ENCODE measurements at regions of chr22 and their contacts with region 1.

Region 1: DNA sequence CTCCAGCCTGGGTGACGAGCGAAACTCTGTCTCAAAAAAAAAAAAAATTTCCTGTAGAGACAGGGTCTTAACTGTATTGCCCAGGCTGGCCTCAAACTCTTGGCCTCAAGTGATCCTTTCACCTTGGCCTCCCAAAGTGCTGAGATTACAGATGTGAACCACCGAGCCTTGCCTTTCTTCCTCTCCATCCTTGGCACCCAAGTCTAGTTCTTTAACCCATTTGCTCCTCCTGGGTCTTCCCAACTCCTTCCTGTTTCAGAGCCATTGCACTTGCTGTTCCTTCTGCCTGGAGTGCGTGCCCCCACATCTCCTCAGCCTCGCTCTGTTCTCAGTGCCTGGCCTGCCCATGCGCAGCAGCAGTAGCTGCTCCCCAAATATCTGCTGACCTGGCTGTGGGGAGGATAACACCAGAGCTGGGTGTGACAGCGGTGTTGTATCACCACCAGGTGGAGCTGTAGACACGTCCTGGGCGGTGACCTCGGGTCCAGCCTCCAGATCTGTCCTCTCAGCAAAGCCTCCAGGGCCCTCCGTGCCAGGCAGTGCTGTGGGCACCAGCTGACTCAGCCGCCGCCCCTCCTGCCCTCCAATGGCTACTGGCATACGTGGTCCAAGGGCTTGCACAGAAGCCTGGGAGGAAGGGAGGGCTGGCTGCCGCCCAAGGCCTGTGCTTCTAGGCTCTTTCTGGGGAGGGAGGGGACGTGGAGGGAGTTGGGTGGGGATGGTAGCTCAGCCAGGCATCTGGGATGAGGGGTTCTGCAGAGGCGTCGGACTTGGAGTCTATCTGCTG is 22.0 kb downstream of the TEF start:
- DNase-seq: peak; percentile 60 to 90 (median 81)
- ATAC-seq: peak; percentile 99
- H3K4me3 ChIP-seq: no peak overlapping the region
- H3K4me3 Mint-ChIP-seq: no peak overlapping the region
- H3K27ac ChIP-seq: no peak overlapping the region
- H3K27ac Mint-ChIP-seq: no peak overlapping the region
- H3K4me1 ChIP-seq: peaks cover 13% of the 10 kb centered on the region
- H3K4me1 Mint-ChIP-seq: peaks cover 11% of the 10 kb centered on the region
- H3K27me3 ChIP-seq: no peaks in the 10 kb centered on the region
- H3K27me3 Mint-ChIP-seq: no peaks in the 10 kb centered on the region
- CTCF ChIP-seq: peak; percentile 93

Region 2: GRCh38 chr22:41327124-41327523 is 76.6 kb before region 1 on chr22:
- CTCF ChIA-PET with region 1: no interaction called
- POLR2A ChIA-PET with region 1: no interaction called
- intact Hi-C with region 1: no loop called
- DNase-seq: no peak
- ATAC-seq: no peak
- H3K4me3 ChIP-seq: no peak overlapping the region
- H3K4me3 Mint-ChIP-seq: no peak overlapping the region
- H3K27ac ChIP-seq: no peak overlapping the region
- H3K27ac Mint-ChIP-seq: no peak overlapping the region
- H3K4me1 ChIP-seq: no peaks in the 10 kb centered on the region
- H3K4me1 Mint-ChIP-seq: no peaks in the 10 kb centered on the region
- H3K27me3 ChIP-seq: no peaks in the 10 kb centered on the region
- H3K27me3 Mint-ChIP-seq: no peaks in the 10 kb centered on the region
- CTCF ChIP-seq: no peak

Region 3: DNA sequence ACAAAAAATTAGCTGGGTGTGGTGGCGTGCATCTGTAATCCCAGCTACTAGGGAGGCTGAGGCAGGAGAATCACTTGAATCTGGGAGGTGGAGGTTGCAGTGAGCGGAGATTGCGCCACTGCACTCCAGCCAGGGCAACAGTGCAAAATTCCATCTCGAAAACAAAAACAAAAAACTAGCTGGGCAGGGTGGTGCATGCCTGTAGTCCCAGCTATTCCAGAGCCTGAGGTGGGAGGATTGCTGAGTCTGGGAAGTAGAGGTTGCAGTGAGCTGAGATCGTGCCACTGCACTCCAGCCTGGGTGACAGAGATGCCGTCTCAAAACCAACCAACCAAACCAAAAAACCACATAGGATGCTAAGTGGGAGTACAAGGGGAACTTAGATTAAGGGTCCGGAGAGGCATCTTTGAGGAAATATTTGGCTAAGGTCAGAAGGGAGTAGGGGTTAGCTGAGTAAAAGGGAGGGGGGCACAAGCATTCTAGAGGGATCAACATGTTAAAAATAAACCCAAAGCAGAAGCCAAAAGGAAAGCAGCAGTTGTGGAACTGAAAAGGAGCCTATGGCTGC is 54.5 kb after region 1 on chr22:
- CTCF ChIA-PET with region 1: interaction called, 13 read pairs
- POLR2A ChIA-PET with region 1: interaction called, 3 read pairs
- intact Hi-C with region 1: no loop called
- DNase-seq: no peak
- ATAC-seq: no peak
- H3K4me3 ChIP-seq: no peak overlapping the region
- H3K4me3 Mint-ChIP-seq: no peak overlapping the region
- H3K27ac ChIP-seq: no peak overlapping the region
- H3K27ac Mint-ChIP-seq: peak overlapping the region; percentile 27
- H3K4me1 ChIP-seq: no peaks in the 10 kb centered on the region
- H3K4me1 Mint-ChIP-seq: peaks cover 8% of the 10 kb centered on the region
- H3K27me3 ChIP-seq: no peaks in the 10 kb centered on the region
- H3K27me3 Mint-ChIP-seq: no peaks in the 10 kb centered on the region
- CTCF ChIP-seq: no peak

Region 4: DNA sequence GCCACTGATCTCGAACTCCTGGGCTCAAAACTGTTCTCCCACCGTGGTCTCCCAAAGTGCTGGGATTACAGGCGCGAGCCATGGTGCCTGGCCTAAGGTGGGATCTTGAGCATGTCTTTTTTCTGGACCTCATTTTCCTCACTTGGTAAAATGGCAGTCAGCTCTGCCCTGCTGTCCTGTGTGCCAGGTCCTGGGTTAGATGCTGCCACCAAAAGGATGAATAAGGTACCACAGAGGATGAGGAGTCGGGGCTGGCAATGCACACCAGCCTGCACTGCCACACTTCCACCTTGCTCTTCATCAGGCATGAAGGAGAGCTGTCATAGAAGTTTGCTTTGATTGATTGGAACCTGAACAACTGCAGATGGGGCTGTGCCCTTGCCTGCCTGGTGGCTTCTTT is 97.5 kb after region 1 on chr22:
- CTCF ChIA-PET with region 1: interaction called, 60 read pairs
- POLR2A ChIA-PET with region 1: interaction called, 4 read pairs
- intact Hi-C with region 1: loop called (anchors 1 kb)
- DNase-seq: peak in 2 of 9 experiments; percentile 31 to 50
- ATAC-seq: peak; percentile 61
- H3K4me3 ChIP-seq: no peak overlapping the region
- H3K4me3 Mint-ChIP-seq: no peak overlapping the region
- H3K27ac ChIP-seq: no peak overlapping the region
- H3K27ac Mint-ChIP-seq: no peak overlapping the region
- H3K4me1 ChIP-seq: no peaks in the 10 kb centered on the region
- H3K4me1 Mint-ChIP-seq: no peaks in the 10 kb centered on the region
- H3K27me3 ChIP-seq: no peaks in the 10 kb centered on the region
- H3K27me3 Mint-ChIP-seq: no peaks in the 10 kb centered on the region
- CTCF ChIP-seq: no peak

Region 5: GRCh38 chr22:41517172-41518047 is 113.7 kb after region 1 on chr22:
- CTCF ChIA-PET with region 1: interaction called, 128 read pairs
- POLR2A ChIA-PET with region 1: no interaction called
- intact Hi-C with region 1: no loop called
- DNase-seq: peak in 6 of 9 experiments; percentile 23 to 62 (median 48)
- ATAC-seq: no peak
- H3K4me3 ChIP-seq: no peak overlapping the region
- H3K4me3 Mint-ChIP-seq: no peak overlapping the region
- H3K27ac ChIP-seq: no peak overlapping the region
- H3K27ac Mint-ChIP-seq: no peak overlapping the region
- H3K4me1 ChIP-seq: no peaks in the 10 kb centered on the region
- H3K4me1 Mint-ChIP-seq: no peaks in the 10 kb centered on the region
- H3K27me3 ChIP-seq: no peaks in the 10 kb centered on the region
- H3K27me3 Mint-ChIP-seq: no peaks in the 10 kb centered on the region
- CTCF ChIP-seq: peak; percentile 59

Region 6: GRCh38 chr22:41526837-41527799 is 123.4 kb after region 1 on chr22:
- CTCF ChIA-PET with region 1: interaction called, 132 read pairs
- POLR2A ChIA-PET with region 1: interaction called, 14 read pairs
- intact Hi-C with region 1: loop called (anchors 1 kb)
- DNase-seq: peak; percentile 49 to 82 (median 72)
- ATAC-seq: peak; percentile 74
- H3K4me3 ChIP-seq: no peak overlapping the region
- H3K4me3 Mint-ChIP-seq: no peak overlapping the region
- H3K27ac ChIP-seq: peak overlapping the region in 1 of 2 experiments; percentile 42
- H3K27ac Mint-ChIP-seq: peak overlapping the region; percentile 70
- H3K4me1 ChIP-seq: peaks cover 19% of the 10 kb centered on the region
- H3K4me1 Mint-ChIP-seq: peaks cover 15% of the 10 kb centered on the region
- H3K27me3 ChIP-seq: no peaks in the 10 kb centered on the region
- H3K27me3 Mint-ChIP-seq: no peaks in the 10 kb centered on the region
- CTCF ChIP-seq: peak; percentile 71

Region 7: GRCh38 chr22:41532908-41533825 is 129.4 kb after region 1 on chr22:
- CTCF ChIA-PET with region 1: interaction called, 132 read pairs
- POLR2A ChIA-PET with region 1: interaction called, 3 read pairs
- intact Hi-C with region 1: no loop called
- DNase-seq: peak; percentile 31 to 74 (median 65)
- ATAC-seq: peak; percentile 80
- H3K4me3 ChIP-seq: no peak overlapping the region
- H3K4me3 Mint-ChIP-seq: no peak overlapping the region
- H3K27ac ChIP-seq: peak overlapping the region in 1 of 2 experiments; percentile 18
- H3K27ac Mint-ChIP-seq: no peak overlapping the region
- H3K4me1 ChIP-seq: no peaks in the 10 kb centered on the region
- H3K4me1 Mint-ChIP-seq: no peaks in the 10 kb centered on the region
- H3K27me3 ChIP-seq: no peaks in the 10 kb centered on the region
- H3K27me3 Mint-ChIP-seq: no peaks in the 10 kb centered on the region
- CTCF ChIP-seq: peak; percentile 66

Region 8: GRCh38 chr22:41596776-41597634 is 193.3 kb after region 1 on chr22:
- CTCF ChIA-PET with region 1: interaction called, 7 read pairs
- POLR2A ChIA-PET with region 1: no interaction called
- intact Hi-C with region 1: loop called in 1 of 2 experiments (anchors 1 kb)
- DNase-seq: peak in 6 of 9 experiments; percentile 4 to 53 (median 36)
- ATAC-seq: peak; percentile 64
- H3K4me3 ChIP-seq: no peak overlapping the region
- H3K4me3 Mint-ChIP-seq: no peak overlapping the region
- H3K27ac ChIP-seq: no peak overlapping the region
- H3K27ac Mint-ChIP-seq: no peak overlapping the region
- H3K4me1 ChIP-seq: no peaks in the 10 kb centered on the region
- H3K4me1 Mint-ChIP-seq: peaks cover 2% of the 10 kb centered on the region
- H3K27me3 ChIP-seq: no peaks in the 10 kb centered on the region
- H3K27me3 Mint-ChIP-seq: no peaks in the 10 kb centered on the region
- CTCF ChIP-seq: peak; percentile 45

Measured in CD8-positive, alpha-beta T cell (primary cell).